ENCODE measurements at regions of chr3 and their contacts with region 1.

Region 1: GRCh38 chr3:32296256-32297204 is 58.0 kb downstream of the CMTM8 start:
- DNase-seq: peak; percentile 76
- H3K4me3 Mint-ChIP-seq: peak overlapping the region; percentile 44
- H3K27ac Mint-ChIP-seq: peak overlapping the region; percentile 63
- H3K4me1 Mint-ChIP-seq: peaks cover 39% of the 10 kb centered on the region
- H3K27me3 Mint-ChIP-seq: no peaks in the 10 kb centered on the region

Region 2: GRCh38 chr3:31918179-31919168 is 378.1 kb before region 1 on chr3:
- CTCF ChIA-PET with region 1: no interaction called
- POLR2A ChIA-PET with region 1: no interaction called
- intact Hi-C with region 1: no loop called
- DNase-seq: no peak
- H3K4me3 Mint-ChIP-seq: no peak overlapping the region
- H3K27ac Mint-ChIP-seq: peak overlapping the region; percentile 47
- H3K4me1 Mint-ChIP-seq: peaks cover 23% of the 10 kb centered on the region
- H3K27me3 Mint-ChIP-seq: no peaks in the 10 kb centered on the region

Region 3: DNA sequence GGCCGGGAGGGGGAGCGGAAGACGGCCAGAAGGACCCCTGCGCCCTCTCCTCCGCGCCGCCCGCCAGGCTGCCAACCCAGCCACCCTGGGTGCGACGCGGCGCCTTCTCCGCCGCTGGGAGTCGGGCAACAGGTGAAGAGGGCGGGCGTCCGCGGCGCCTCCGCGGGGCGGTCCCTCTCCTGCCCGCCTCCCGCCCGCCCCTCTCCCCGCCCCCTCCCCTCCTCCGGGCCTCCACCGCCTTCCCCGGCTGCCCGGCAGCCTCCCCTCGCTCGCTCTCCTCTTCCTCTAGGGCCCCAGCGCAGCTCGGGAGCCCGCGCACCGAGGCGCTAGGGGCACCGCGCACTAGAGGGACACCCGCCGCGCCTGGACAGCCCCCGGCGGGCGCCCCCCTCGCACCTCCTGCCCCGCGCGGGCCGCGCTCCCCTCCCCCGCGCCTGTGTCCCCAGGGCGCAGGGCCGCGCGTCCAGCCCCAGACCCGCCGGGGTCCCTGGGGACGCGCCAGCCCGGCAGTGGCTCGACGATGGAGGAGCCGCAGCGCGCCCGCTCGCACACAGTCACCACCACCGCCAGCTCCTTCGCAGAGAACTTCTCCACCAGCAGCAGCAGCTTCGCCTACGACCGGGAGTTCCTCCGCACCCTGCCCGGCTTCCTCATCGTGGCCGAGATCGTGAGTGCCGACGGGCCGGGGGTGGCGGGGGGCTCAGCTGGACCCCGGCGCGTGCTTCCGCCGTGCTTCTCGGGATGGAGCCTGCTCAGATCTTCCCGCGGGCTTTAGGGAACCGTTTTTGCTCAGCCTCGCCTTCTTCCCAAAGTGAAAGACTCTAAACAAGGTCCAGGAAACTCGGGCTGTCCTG is 57.9 kb before region 1 on chr3 and contains the start of gene CMTM8:
- CTCF ChIA-PET with region 1: interaction called, 36 read pairs
- POLR2A ChIA-PET with region 1: no interaction called
- intact Hi-C with region 1: no loop called
- DNase-seq: peak; percentile 75
- H3K4me3 Mint-ChIP-seq: peak within 1 kb of the TSS; percentile 81
- H3K27ac Mint-ChIP-seq: peak within 1 kb of the TSS; percentile 34
- H3K4me1 Mint-ChIP-seq: peaks cover 31% of the 10 kb centered on the region
- H3K27me3 Mint-ChIP-seq: peaks cover 4% of the 10 kb centered on the region
- total RNA-seq, gene CMTM8: 11.6 to 13.0 TPM

Region 4: GRCh38 chr3:32285891-32286290 is 10.6 kb before region 1 on chr3:
- CTCF ChIA-PET with region 1: interaction called, 32 read pairs
- POLR2A ChIA-PET with region 1: no interaction called
- intact Hi-C with region 1: no loop called
- DNase-seq: peak; percentile 45
- H3K4me3 Mint-ChIP-seq: no peak overlapping the region
- H3K27ac Mint-ChIP-seq: peak overlapping the region; percentile 69
- H3K4me1 Mint-ChIP-seq: peaks cover 48% of the 10 kb centered on the region
- H3K27me3 Mint-ChIP-seq: no peaks in the 10 kb centered on the region

Region 5: DNA sequence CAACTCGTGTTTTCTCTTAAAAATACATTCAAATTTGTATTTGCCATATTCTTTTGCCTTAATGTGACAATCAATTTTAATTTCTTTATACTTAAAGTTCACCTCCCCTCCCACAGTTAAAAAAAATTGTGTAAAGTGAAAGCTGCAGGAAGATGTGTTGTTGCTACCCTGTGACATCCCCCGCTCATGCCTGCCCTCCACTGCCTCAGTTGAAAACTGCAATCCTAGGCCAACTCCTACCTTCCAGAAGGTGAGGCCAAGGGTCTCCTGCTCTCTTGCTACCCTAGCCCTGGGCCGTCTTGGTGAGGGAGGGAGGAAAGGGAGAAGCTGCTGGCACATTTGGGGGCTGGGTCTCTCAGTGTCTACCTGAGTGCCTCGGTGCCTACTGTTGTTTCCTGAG is 38.1 kb after region 1 on chr3:
- CTCF ChIA-PET with region 1: interaction called, 89 read pairs
- POLR2A ChIA-PET with region 1: interaction called, 3 read pairs
- intact Hi-C with region 1: loop called (anchors 1 kb)
- DNase-seq: peak; percentile 80
- H3K4me3 Mint-ChIP-seq: no peak overlapping the region
- H3K27ac Mint-ChIP-seq: no peak overlapping the region
- H3K4me1 Mint-ChIP-seq: peaks cover 48% of the 10 kb centered on the region
- H3K27me3 Mint-ChIP-seq: no peaks in the 10 kb centered on the region

Region 6: DNA sequence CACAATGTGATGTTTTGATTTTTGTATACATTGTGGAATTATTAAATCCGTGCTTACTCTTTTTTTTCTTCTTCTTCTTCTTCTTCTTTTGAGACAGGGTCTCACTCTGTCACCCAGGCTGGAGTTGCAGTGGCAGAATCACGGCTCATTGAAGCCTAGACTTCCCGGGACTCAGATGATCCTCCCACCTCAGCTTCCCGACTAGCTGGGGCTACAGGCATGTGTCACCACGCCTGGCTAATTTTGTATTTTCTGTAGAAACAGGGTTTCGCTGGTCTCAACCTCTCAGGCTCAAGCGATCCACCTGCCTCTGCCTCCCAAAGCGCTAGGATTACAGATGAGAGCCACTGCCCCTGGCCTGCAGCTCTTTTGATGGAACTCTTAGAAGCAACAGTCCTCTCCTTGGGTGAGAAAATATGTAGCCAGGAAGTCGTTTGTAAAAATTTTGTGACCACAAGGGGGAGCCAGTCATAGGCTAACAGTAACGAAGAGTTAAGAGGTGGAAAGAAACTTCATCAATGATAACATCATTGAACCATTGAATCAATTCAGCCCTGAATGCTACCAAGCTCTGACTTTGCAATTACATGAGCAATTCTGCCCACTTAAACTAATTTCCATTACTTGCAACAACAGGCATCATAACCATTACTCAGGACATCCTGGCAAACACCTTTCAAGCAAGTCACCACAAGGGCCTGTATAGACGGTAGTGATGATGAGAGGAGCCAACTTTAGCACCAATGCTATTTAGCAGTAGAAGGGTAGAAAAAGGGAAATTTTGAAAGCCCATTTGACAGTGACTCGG is 78.5 kb after region 1 on chr3:
- CTCF ChIA-PET with region 1: interaction called, 27 read pairs
- POLR2A ChIA-PET with region 1: no interaction called
- intact Hi-C with region 1: loop called (anchors 2 kb)
- DNase-seq: peak; percentile 67
- H3K4me3 Mint-ChIP-seq: peak overlapping the region; percentile 5
- H3K27ac Mint-ChIP-seq: peak overlapping the region; percentile 53
- H3K4me1 Mint-ChIP-seq: peaks cover 23% of the 10 kb centered on the region
- H3K27me3 Mint-ChIP-seq: no peaks in the 10 kb centered on the region

Measured in activated CD4-positive, alpha-beta memory T cell treated with anti-CD3 and anti-CD28 coated beads for 36 hours (primary cell).